ENCODE measurements at regions of chr4 and their contacts with region 1.

Region 1: GRCh38 chr4:153528705-153529485 is 62.7 kb downstream of the TMEM131L start:
- DNase-seq: peak; percentile 68
- H3K4me3 Mint-ChIP-seq: peak overlapping the region; percentile 80
- H3K27ac Mint-ChIP-seq: peak overlapping the region; percentile 95
- H3K4me1 Mint-ChIP-seq: peaks cover 72% of the 10 kb centered on the region
- H3K27me3 Mint-ChIP-seq: no peaks in the 10 kb centered on the region

Region 2: GRCh38 chr4:153497988-153498967 is 30.6 kb before region 1 on chr4:
- intact Hi-C with region 1: loop called (anchors 1 kb)
- DNase-seq: peak; percentile 61
- H3K4me3 Mint-ChIP-seq: peak overlapping the region; percentile 80
- H3K27ac Mint-ChIP-seq: peak overlapping the region; percentile 94
- H3K4me1 Mint-ChIP-seq: peaks cover 76% of the 10 kb centered on the region
- H3K27me3 Mint-ChIP-seq: no peaks in the 10 kb centered on the region

Region 3: DNA sequence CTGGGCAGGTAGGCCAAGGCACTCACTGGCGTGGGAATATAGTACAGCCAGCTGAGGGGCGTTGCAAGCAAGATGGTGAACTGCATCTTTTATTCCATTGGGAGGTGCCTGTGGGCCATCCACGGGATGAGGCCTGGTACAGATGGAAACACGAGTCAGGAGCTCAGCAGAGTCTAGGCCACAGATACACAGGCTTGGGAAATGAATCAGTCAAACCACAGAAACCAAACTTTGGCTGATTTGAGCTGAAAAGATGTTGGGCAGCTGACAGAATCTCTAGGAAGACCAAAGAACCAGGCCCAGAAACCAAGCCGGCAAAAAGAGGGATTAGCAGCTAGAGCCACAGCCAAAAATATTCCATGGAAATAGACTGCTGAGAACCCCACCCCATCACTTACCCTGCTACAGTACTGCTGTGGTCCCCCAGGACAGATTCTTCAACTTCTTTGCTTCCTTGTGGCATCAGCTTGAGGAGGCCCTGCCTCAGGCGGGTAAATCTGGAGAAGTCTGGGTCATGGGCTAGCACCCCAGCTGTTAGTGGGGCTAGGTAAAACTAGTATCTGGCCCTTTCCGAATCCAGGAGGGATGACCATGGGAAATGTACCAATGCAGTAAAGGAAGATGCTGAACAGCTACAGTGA is 12.7 kb after region 1 on chr4:
- intact Hi-C with region 1: loop called (anchors 1 kb)
- DNase-seq: peak; percentile 73
- H3K4me3 Mint-ChIP-seq: no peak overlapping the region
- H3K27ac Mint-ChIP-seq: peak overlapping the region; percentile 17
- H3K4me1 Mint-ChIP-seq: peaks cover 39% of the 10 kb centered on the region
- H3K27me3 Mint-ChIP-seq: no peaks in the 10 kb centered on the region

Region 4: GRCh38 chr4:153573881-153574802 is 45.2 kb after region 1 on chr4:
- intact Hi-C with region 1: loop called (anchors 1 kb)
- DNase-seq: peak; percentile 89
- H3K4me3 Mint-ChIP-seq: no peak overlapping the region
- H3K27ac Mint-ChIP-seq: peak overlapping the region; percentile 52
- H3K4me1 Mint-ChIP-seq: peaks cover 49% of the 10 kb centered on the region
- H3K27me3 Mint-ChIP-seq: no peaks in the 10 kb centered on the region

Region 5: DNA sequence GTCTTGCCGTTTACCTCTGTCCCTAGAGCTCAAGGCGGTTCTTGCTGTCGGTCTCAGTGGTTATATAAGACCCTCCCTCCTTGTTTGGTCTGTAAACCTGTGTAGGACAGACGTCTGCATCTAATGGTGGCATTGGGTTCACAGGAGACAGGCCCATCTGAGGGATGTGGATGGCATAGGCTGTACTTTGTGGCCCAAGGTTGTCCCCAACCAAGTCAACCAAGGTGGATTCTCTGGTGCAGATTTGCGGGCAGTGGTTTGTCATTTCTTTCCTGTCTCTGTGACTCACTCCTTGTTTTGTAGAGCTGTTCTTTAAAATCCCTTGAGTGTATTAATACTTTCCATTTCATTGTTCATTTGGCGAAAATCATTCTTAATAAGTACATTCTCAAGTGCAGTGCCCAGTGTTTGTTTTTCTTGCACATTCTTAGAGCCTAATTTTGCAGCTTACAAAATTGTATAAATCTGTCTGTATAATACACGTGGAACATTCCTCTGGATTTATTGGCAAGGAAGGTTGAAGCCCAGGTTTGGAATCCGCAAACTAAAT is 87.2 kb after region 1 on chr4:
- intact Hi-C with region 1: loop called (anchors 5 kb)
- DNase-seq: peak; percentile 72
- H3K4me3 Mint-ChIP-seq: no peak overlapping the region
- H3K27ac Mint-ChIP-seq: peak overlapping the region; percentile 2
- H3K4me1 Mint-ChIP-seq: peaks cover 29% of the 10 kb centered on the region
- H3K27me3 Mint-ChIP-seq: no peaks in the 10 kb centered on the region